ENCODE measurements at regions of chr21 and their contacts with region 1.

Region 1: GRCh38 chr21:36156339-36156814 is 247 bp upstream of the DOP1B start:
- H3K4me3 Mint-ChIP-seq: peak overlapping the region; percentile 88
- H3K27ac Mint-ChIP-seq: peak overlapping the region; percentile 82
- H3K4me1 Mint-ChIP-seq: peaks cover 49% of the 10 kb centered on the region
- H3K27me3 Mint-ChIP-seq: peaks cover 6% of the 10 kb centered on the region

Region 2: DNA sequence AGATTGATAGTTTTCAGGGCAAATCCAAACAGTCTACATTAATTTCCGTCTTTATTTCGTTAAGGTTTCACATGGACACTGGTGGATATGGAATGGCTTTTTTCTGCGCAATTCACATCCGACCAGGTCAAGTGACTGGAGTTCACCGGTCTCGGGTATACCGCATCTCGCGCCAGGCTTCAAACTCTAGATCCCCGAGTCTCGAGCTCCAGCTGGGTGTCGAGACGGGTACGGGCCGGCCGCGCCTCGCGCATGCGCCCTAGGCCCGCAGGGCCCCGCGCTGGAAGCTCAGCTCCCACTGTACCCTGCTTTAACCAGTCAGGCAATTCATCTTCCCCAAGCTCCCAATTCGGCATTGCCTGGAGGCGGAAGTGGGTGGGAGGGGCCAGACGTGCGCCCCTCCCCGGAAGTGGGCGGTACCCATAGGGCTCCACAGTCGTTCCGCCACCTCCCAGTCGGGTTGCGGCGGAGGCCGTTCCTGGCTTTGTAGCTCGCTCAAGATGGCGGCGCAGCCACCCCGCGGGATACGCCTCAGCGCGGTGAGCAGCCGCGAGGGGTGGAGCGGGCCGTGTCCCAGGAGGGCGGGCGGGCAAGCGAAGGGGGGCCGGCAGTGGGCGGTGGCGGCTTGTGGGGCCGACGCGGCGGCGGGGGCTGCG is 163.5 kb after region 1 on chr21 and contains the start of gene MORC3:
- intact Hi-C with region 1: loop called (anchors 10 kb)
- H3K4me3 Mint-ChIP-seq: peak within 1 kb of the TSS; percentile 83
- H3K27ac Mint-ChIP-seq: peak within 1 kb of the TSS; percentile 96
- H3K4me1 Mint-ChIP-seq: peaks cover 42% of the 10 kb centered on the region
- H3K27me3 Mint-ChIP-seq: no peaks in the 10 kb centered on the region